ENCODE measurements at regions of chr2 and their contacts with region 1.

Region 1: GRCh38 chr2:168118733-168119514 is 128.5 kb downstream of the STK39 start:
- DNase-seq: no peak
- ATAC-seq: peak; percentile 74

Region 2: DNA sequence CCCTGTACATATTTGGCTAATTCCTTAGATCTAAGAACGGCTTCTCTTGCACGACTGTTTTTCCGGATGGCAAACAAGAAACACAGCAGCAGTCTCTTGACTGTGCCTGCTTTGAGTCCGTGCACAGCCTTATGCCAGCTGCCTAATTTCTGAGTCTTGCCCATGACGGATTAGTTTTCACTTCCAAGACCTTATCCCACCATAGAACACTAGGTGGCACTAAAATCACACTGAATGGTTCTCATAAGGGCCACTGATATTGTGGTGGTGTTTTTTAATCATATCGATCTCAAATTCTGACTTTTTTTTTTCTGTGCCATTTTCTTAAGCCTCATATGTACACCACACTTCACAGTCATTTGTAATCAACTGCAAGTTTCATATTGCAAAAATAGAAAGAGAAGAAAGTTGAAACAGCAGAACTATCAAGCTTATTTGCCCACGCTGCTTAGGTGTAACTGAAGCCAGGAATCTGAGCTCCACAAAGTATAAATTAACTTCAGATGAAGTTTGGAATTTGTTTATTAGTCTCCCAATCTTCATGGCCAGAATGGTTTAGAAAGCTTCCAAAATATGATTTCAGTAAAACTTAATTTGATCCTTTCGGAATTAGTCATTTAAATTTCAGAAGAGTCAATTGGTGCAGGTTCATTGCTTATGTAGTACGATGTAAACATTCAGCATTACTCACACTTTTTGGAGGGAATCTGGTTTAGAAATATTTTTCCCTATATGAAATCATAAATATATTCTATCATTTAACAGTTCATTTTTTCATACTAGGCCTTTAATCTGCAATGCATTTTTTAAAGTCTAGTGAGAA is 1579.4 kb before region 1 on chr2:
- intact Hi-C with region 1: loop called (anchors 10 kb)
- DNase-seq: no peak
- ATAC-seq: no peak

Region 3: GRCh38 chr2:167964650-167965413 is 154.1 kb before region 1 on chr2:
- intact Hi-C with region 1: loop called (anchors 2 kb)
- DNase-seq: no peak
- ATAC-seq: peak; percentile 31